Activated CD4-positive, alpha-beta memory T cell treated with anti-CD3 and anti-CD28 coated beads, Interleukin-2, amount 10 ng/mL, durations not matched to agents 7 days and 5 days (primary cell): ENCODE measurements at regions of chr11 and their contacts with region 1.

Region 1: DNA sequence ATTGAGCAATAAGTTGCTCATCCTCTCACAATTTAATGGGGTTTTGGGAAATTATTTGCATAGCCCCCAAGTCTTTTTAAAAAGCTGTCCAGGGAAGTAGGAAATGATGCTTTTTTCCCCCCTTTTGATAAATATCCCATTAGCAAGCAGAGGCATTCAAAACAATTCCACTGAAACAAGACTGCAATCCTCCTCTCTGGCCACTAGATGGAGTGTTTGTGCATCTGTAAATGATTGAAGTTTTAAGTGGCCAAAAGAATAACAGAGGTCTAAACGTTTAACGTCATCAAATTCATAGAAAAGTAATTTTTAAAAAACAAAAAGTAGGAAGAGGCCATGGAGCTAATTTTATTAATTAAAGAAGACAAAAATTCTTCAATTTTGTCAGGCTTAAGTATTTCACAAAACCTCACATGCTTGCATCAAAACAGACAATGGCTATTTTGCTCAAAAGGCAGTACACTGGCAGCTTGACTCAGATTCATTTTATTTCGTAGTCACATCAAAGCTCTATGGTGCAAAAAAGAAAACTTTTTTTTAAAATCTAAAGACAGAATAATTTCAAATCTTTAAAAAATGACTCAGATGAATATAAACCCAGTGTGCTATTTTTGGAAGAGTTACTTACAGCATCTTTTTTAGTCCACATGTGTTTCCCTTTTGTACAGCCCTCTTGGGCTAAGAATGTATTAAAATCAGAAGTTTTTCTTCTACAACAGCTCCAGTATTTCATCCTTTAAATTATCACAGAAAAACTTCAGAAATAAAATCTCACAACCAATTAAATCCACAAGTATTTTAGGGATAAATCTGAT is 17.8 kb downstream of the CHORDC1 start:
- DNase-seq: no peak
- H3K4me3 Mint-ChIP-seq: no peak overlapping the region
- H3K27ac Mint-ChIP-seq: peak overlapping the region; percentile 16
- H3K4me1 Mint-ChIP-seq: peaks cover 7% of the 10 kb centered on the region
- H3K27me3 Mint-ChIP-seq: no peaks in the 10 kb centered on the region

Region 2: GRCh38 chr11:90222459-90223247 is 17.6 kb after region 1 on chr11 and contains the start of gene CHORDC1:
- CTCF ChIA-PET with region 1: interaction called, 28 read pairs
- POLR2A ChIA-PET with region 1: interaction called, 4 read pairs
- DNase-seq: peak; percentile 94
- H3K4me3 Mint-ChIP-seq: peak within 1 kb of the TSS; percentile 95
- H3K27ac Mint-ChIP-seq: peak within 1 kb of the TSS; percentile 88
- H3K4me1 Mint-ChIP-seq: peaks cover 43% of the 10 kb centered on the region
- H3K27me3 Mint-ChIP-seq: no peaks in the 10 kb centered on the region
- total RNA-seq, gene CHORDC1: 47.1 to 50.7 TPM

Region 3: GRCh38 chr11:90344529-90344928 is 139.5 kb after region 1 on chr11:
- CTCF ChIA-PET with region 1: no interaction called
- POLR2A ChIA-PET with region 1: no interaction called
- DNase-seq: no peak
- H3K4me3 Mint-ChIP-seq: no peak overlapping the region
- H3K27ac Mint-ChIP-seq: no peak overlapping the region
- H3K4me1 Mint-ChIP-seq: no peaks in the 10 kb centered on the region
- H3K27me3 Mint-ChIP-seq: no peaks in the 10 kb centered on the region